ENCODE measurements at regions of chr11 and their contacts with region 1.

Region 1: GRCh38 chr11:85752890-85753581 is 57.9 kb downstream of the SYTL2 start:
- DNase-seq: peak; percentile 44 to 99 (median 99)
- ATAC-seq: peak; percentile 95
- H3K4me3 ChIP-seq: peak overlapping the region; percentile 54
- H3K4me3 Mint-ChIP-seq: peak overlapping the region; percentile 75 to 91 (median 84)
- H3K27ac ChIP-seq: peak overlapping the region; percentile 70
- H3K27ac Mint-ChIP-seq: peak overlapping the region; percentile 90 to 99 (median 98)
- H3K4me1 ChIP-seq: peaks cover 80 to 82% of the 10 kb centered on the region in 2 donors
- H3K4me1 Mint-ChIP-seq: peaks cover 64 to 100% (median 98%) of the 10 kb centered on the region in 7 donors
- H3K27me3 ChIP-seq: no peaks in the 10 kb centered on the region
- H3K27me3 Mint-ChIP-seq: no peaks in the 10 kb centered on the region

Region 2: DNA sequence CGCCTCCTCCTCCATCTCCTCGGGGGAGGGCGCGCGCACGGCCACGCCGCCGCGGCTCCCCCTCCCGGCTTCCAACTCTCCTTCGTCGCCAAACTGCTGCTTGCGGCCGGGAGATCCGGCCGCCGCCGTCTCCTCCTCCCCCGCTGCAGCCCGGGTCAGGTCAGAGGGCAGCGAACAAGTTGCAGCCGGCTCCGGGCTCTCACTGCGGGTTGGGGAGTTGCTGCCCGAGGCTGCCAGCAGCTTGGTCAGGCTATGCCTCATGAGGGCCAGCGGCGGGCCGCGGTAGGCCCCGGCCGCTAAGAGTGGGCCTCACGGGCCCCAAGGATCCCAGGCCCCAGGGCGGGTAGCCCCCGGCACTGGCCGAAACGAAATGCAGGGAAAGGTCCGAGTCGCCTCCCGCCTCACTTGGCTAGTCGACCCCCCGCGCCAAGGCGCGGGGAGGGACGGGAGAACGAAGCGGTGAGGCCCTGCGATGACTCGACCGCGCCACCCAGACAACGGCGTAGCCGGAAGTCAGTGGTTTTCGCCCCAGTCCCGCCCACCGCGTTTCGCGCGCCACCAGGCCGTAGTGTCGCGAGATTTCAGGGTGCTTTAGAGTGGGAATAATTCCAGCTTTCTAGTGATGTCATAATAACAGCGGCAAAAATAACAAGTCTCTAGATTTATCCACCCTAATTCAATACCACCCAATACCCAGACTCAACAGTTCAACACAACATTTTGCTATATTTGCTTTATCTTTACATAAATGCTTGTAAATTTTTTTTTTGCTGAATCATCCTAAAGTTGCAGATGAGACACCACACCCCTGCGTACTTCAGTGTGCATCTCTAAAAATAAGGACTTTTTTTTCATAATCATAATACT is 88.2 kb before region 1 on chr11 and contains the start of gene CREBZF:
- CTCF ChIA-PET with region 1: no interaction called
- POLR2A ChIA-PET with region 1: interaction called, 8 read pairs
- intact Hi-C with region 1: loop called (anchors 1 kb)
- DNase-seq: peak; percentile 83 to 96 (median 92)
- ATAC-seq: peak; percentile 85
- H3K4me3 ChIP-seq: peak within 1 kb of the TSS; percentile 97
- H3K4me3 Mint-ChIP-seq: peak within 1 kb of the TSS; percentile 93 to 100 (median 99)
- H3K27ac ChIP-seq: peak within 1 kb of the TSS; percentile 99
- H3K27ac Mint-ChIP-seq: peak within 1 kb of the TSS; percentile 96 to 100 (median 99)
- H3K4me1 ChIP-seq: peaks cover 19 to 31% of the 10 kb centered on the region in 2 donors
- H3K4me1 Mint-ChIP-seq: peaks cover 29 to 55% (median 39%) of the 10 kb centered on the region in 7 donors
- H3K27me3 ChIP-seq: no peaks in the 10 kb centered on the region
- H3K27me3 Mint-ChIP-seq: peaks cover 0 to 5% (median 0%) of the 10 kb centered on the region in 5 donors
- total RNA-seq, gene CREBZF: 56.9 to 114 (median 59.7) TPM

Region 3: DNA sequence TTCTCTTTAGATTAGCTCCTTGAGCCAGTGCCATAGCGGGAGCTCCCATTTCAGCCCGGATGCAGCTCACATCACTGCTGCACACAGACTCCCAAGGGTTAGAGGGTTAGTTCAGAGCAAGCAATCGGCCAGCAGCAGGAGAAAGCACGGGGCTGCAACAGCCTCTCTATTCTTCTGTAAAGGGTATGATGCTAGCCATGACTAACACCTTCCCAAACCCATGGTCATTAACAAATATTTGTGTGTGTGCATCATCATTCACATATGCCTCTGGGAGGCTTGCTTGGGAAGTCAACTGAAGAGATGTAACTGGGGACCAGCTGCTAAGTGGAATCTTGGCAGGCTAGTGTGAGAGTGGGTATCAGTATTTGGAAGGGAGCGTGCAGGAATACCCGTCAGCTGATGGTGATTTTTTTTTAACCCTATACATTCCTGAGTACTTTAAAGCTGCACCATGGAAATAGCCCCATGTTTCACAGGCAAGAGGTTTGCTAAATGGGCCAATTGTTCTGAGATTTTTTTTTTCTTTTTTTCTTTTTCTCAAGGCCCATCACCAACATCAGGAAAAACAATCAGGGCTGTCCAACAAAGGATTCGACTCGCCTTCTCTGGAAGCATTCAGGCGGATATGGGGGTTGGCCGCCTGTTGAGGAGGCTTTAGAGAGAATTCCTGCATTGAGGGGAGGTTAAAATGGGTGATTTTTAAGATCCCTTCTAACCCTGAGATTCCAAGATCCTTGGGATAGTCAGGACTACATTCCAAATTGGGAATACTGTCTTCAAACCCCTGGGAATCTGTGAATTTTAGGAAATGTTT is 33.8 kb before region 1 on chr11:
- CTCF ChIA-PET with region 1: interaction called, 3 read pairs
- POLR2A ChIA-PET with region 1: no interaction called
- intact Hi-C with region 1: loop called in 1 of 2 experiments (anchors 5 kb)
- DNase-seq: no peak
- ATAC-seq: no peak
- H3K4me3 ChIP-seq: no peak overlapping the region
- H3K4me3 Mint-ChIP-seq: no peak overlapping the region
- H3K27ac ChIP-seq: no peak overlapping the region
- H3K27ac Mint-ChIP-seq: peak overlapping the region in 1 of 9 donors; percentile 84
- H3K4me1 ChIP-seq: no peaks in the 10 kb centered on the region
- H3K4me1 Mint-ChIP-seq: peaks cover 0 to 4% (median 0%) of the 10 kb centered on the region in 7 donors
- H3K27me3 ChIP-seq: no peaks in the 10 kb centered on the region
- H3K27me3 Mint-ChIP-seq: peaks cover 0 to 2% (median 0%) of the 10 kb centered on the region in 5 donors

Region 4: DNA sequence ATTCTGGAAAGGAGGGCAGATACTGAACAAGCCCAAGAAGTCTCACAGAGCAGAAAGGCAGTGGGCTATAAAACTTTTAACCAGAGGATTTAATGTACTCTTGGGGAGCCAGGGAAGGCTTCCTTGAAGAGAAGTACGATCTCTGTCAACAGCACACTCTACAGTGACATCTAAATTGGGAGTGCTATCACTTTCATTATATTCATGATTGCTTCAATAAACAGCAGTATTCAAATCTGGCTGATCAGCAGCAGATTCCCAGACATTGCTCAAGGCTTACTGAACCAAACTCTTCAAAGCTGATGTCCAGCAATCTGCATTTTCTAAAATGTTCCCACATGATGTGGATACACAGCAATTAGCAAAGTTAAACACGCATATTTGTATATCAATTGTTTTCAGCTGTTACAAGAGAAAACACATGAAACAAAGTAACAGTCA is 13.7 kb after region 1 on chr11:
- CTCF ChIA-PET with region 1: interaction called, 3 read pairs
- POLR2A ChIA-PET with region 1: interaction called, 3 read pairs
- intact Hi-C with region 1: loop called in 1 of 2 experiments (anchors 1 kb)
- DNase-seq: no peak
- ATAC-seq: no peak
- H3K4me3 ChIP-seq: no peak overlapping the region
- H3K4me3 Mint-ChIP-seq: no peak overlapping the region
- H3K27ac ChIP-seq: no peak overlapping the region
- H3K27ac Mint-ChIP-seq: no peak overlapping the region
- H3K4me1 ChIP-seq: peaks cover 0 to 6% of the 10 kb centered on the region in 2 donors
- H3K4me1 Mint-ChIP-seq: peaks cover 12 to 71% (median 60%) of the 10 kb centered on the region in 7 donors
- H3K27me3 ChIP-seq: no peaks in the 10 kb centered on the region
- H3K27me3 Mint-ChIP-seq: no peaks in the 10 kb centered on the region

Region 5: DNA sequence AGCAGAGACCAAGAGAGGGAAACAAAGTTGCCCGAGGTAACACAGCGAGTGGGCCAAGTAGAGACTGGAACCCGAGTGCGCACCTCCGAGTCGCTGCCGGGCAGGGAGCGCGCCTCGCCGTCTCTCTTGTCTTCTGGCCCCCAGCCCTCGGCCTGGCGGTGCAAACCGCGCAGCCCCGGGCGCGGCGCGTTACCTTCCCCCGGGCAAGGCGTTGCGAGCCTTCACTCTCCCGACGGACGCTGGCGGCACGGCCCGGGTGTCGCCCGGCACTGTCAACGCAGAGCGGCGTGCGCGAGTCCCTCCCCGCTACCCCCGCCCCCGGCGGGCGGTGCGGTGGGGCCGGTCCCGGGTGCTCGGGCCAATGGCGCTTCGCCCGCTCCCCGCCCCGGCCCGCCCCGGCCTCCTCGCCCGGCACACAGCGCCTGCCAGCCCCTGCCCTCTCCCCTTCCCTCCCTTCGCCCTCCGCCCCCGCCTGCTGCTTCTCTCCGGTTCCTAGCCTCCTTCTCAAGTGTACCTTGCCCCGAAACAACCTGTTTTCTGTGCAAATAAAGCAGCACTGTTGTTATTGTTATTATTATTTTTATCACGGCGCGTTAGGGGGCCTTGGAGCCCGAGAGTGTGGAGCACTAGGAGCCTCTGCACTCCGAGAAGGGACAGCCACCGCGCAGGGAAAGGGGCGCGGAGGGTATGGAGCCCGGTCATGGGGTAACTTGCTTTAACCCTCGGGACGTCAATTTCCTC is 58.0 kb after region 1 on chr11 and contains the start of gene SYTL2:
- CTCF ChIA-PET with region 1: no interaction called
- POLR2A ChIA-PET with region 1: interaction called, 5 read pairs
- intact Hi-C with region 1: loop called (anchors 1 kb)
- DNase-seq: peak; percentile 69 to 87 (median 75)
- ATAC-seq: peak; percentile 95
- H3K4me3 ChIP-seq: peak within 1 kb of the TSS; percentile 86
- H3K4me3 Mint-ChIP-seq: peak within 1 kb of the TSS; percentile 87 to 97 (median 95)
- H3K27ac ChIP-seq: peak within 1 kb of the TSS; percentile 64
- H3K27ac Mint-ChIP-seq: peak within 1 kb of the TSS; percentile 79 to 98 (median 93)
- H3K4me1 ChIP-seq: peaks cover 14 to 32% of the 10 kb centered on the region in 2 donors
- H3K4me1 Mint-ChIP-seq: peaks cover 32 to 61% (median 52%) of the 10 kb centered on the region in 7 donors
- H3K27me3 ChIP-seq: no peaks in the 10 kb centered on the region
- H3K27me3 Mint-ChIP-seq: peaks cover 0 to 10% (median 0%) of the 10 kb centered on the region in 5 donors
- total RNA-seq, gene SYTL2: 24.8 to 62.9 (median 27.5) TPM

Region 6: GRCh38 chr11:86244522-86245368 is 491.7 kb after region 1 on chr11 and contains the start of gene EED:
- CTCF ChIA-PET with region 1: no interaction called
- POLR2A ChIA-PET with region 1: no interaction called
- intact Hi-C with region 1: loop called (anchors 1 to 2 kb)
- DNase-seq: peak; percentile 88 to 94 (median 92)
- ATAC-seq: peak; percentile 94
- H3K4me3 ChIP-seq: peak within 1 kb of the TSS; percentile 100
- H3K4me3 Mint-ChIP-seq: no peak within 1 kb of the TSS
- H3K27ac ChIP-seq: peak within 1 kb of the TSS; percentile 97
- H3K27ac Mint-ChIP-seq: no peak within 1 kb of the TSS
- H3K4me1 ChIP-seq: peaks cover 32 to 33% of the 10 kb centered on the region in 2 donors
- H3K4me1 Mint-ChIP-seq: peaks cover 0 to 34% (median 1%) of the 10 kb centered on the region in 7 donors
- H3K27me3 ChIP-seq: no peaks in the 10 kb centered on the region
- H3K27me3 Mint-ChIP-seq: peaks cover 0 to 5% (median 0%) of the 10 kb centered on the region in 5 donors
- total RNA-seq, gene EED: 22.2 to 62.4 (median 35.5) TPM

Measured in naive thymus-derived CD4-positive, alpha-beta T cell (primary cell).